MCF 10A (cell line): ENCODE measurements at regions of chr6 and their contacts with region 1.

Region 1: GRCh38 chr6:107704347-107705013 is 119.6 kb downstream of the SCML4 start:
- DNase-seq: peak; percentile 45
- H3K4me3 Mint-ChIP-seq: no peak overlapping the region
- H3K27ac Mint-ChIP-seq: no peak overlapping the region
- H3K4me1 Mint-ChIP-seq: no peaks in the 10 kb centered on the region
- H3K27me3 Mint-ChIP-seq: peaks cover 7% of the 10 kb centered on the region
- CTCF ChIP-seq: peak; percentile 81

Region 2: GRCh38 chr6:107179004-107179403 is 525.5 kb before region 1 on chr6:
- CTCF ChIA-PET with region 1: no interaction called
- POLR2A ChIA-PET with region 1: no interaction called
- intact Hi-C with region 1: loop called (anchors 1 kb)
- DNase-seq: peak; percentile 53
- H3K4me3 Mint-ChIP-seq: no peak overlapping the region
- H3K27ac Mint-ChIP-seq: no peak overlapping the region
- H3K4me1 Mint-ChIP-seq: peaks cover 5% of the 10 kb centered on the region
- H3K27me3 Mint-ChIP-seq: no peaks in the 10 kb centered on the region
- CTCF ChIP-seq: peak; percentile 34

Region 3: GRCh38 chr6:107691062-107691751 is 13.3 kb before region 1 on chr6:
- CTCF ChIA-PET with region 1: interaction called, 13 read pairs
- POLR2A ChIA-PET with region 1: no interaction called
- intact Hi-C with region 1: no loop called
- DNase-seq: peak; percentile 31
- H3K4me3 Mint-ChIP-seq: no peak overlapping the region
- H3K27ac Mint-ChIP-seq: no peak overlapping the region
- H3K4me1 Mint-ChIP-seq: no peaks in the 10 kb centered on the region
- H3K27me3 Mint-ChIP-seq: no peaks in the 10 kb centered on the region
- CTCF ChIP-seq: no peak